AG04450 (cell line): ENCODE measurements at regions of chr7 and their contacts with region 1.

Region 1: GRCh38 chr7:29921404-29922010 is 68.1 kb downstream of the SCRN1 start:
- DNase-seq: peak; percentile 30
- H3K4me3 ChIP-seq: no peak overlapping the region
- H3K27ac ChIP-seq: no peak overlapping the region
- H3K27me3 ChIP-seq: no peaks in the 10 kb centered on the region
- CTCF ChIP-seq: peak; percentile 94

Region 2: GRCh38 chr7:29228289-29229011 is 693.1 kb before region 1 on chr7:
- CTCF ChIA-PET with region 1: no interaction called
- POLR2A ChIA-PET with region 1: no interaction called
- DNase-seq: no peak
- H3K4me3 ChIP-seq: no peak overlapping the region
- H3K27ac ChIP-seq: no peak overlapping the region
- H3K27me3 ChIP-seq: no peaks in the 10 kb centered on the region
- CTCF ChIP-seq: no peak

Region 3: GRCh38 chr7:29636009-29636351 is 285.5 kb before region 1 on chr7:
- CTCF ChIA-PET with region 1: interaction called, 18 read pairs
- POLR2A ChIA-PET with region 1: no interaction called
- DNase-seq: no peak
- H3K4me3 ChIP-seq: no peak overlapping the region
- H3K27ac ChIP-seq: no peak overlapping the region
- H3K27me3 ChIP-seq: no peaks in the 10 kb centered on the region
- CTCF ChIP-seq: no peak

Region 4: GRCh38 chr7:29878081-29878688 is 43.3 kb before region 1 on chr7:
- CTCF ChIA-PET with region 1: interaction called, 39 read pairs
- POLR2A ChIA-PET with region 1: no interaction called
- DNase-seq: peak; percentile 20
- H3K4me3 ChIP-seq: no peak overlapping the region
- H3K27ac ChIP-seq: no peak overlapping the region
- H3K27me3 ChIP-seq: peaks cover 7% of the 10 kb centered on the region
- CTCF ChIP-seq: peak; percentile 66

Region 5: GRCh38 chr7:29894256-29894655 is 27.3 kb before region 1 on chr7:
- CTCF ChIA-PET with region 1: no interaction called
- POLR2A ChIA-PET with region 1: no interaction called
- DNase-seq: no peak
- H3K4me3 ChIP-seq: no peak overlapping the region
- H3K27ac ChIP-seq: no peak overlapping the region
- H3K27me3 ChIP-seq: peaks cover 10% of the 10 kb centered on the region
- CTCF ChIP-seq: no peak

Region 6: DNA sequence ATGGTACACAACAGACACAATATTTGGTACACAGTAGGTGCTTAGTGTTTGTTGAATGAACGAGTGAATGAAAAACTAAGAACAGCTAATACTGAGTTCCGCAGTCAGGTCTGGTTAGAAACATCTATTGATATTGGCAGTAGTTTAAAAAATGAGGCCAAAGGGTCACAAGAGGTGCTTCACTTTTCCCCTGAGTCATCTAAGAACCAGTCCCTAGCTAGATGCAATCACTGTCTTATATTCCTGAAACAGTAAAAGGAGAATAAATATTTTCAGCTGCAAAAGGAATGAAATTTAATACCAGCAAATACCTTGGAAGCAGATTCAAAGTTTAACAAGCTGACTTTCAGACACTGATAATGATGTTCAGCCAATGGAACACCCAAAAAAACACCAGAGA is 13.6 kb after region 1 on chr7:
- CTCF ChIA-PET with region 1: interaction called, 52 read pairs
- POLR2A ChIA-PET with region 1: no interaction called
- DNase-seq: no peak
- H3K4me3 ChIP-seq: no peak overlapping the region
- H3K27ac ChIP-seq: no peak overlapping the region
- H3K27me3 ChIP-seq: no peaks in the 10 kb centered on the region
- CTCF ChIP-seq: no peak

Region 7: DNA sequence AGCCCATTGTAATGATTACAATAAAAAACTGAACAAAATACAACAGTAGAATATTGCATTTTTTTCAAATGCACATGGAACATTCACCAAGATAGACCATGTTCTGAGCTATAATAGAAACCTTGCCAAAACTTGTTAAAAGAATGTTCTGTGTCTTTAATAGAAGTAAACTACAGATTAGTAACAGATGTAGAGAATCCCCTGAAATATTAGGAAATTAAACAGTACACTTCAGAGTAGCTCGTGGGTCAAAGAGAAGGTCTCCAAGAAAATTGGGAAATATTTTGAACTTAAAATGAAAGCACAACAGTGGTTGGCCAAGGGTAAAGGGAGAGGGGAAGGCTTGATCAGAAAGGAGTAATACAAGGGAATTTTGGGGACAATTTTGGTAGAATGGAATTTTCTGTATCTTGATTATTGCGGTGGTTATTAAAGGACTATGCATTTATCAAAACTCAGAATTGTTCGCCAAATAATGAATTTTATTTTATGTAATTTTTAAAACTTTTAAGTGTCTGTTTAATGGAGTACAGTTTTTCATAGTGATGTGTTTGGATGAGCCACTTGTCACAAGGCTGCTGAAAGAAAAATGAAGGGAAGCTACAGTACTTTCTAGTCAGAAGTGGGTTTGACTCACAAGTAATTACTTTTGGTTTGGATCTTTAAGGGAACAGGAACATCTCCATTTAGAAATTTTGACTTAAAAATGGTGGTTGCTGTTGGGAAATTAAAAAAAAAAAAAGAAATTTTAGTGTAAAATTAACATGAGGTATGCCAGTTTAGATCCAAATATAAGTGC is 116.9 kb after region 1 on chr7:
- CTCF ChIA-PET with region 1: interaction called, 10 read pairs
- POLR2A ChIA-PET with region 1: no interaction called
- DNase-seq: no peak
- H3K4me3 ChIP-seq: no peak overlapping the region
- H3K27ac ChIP-seq: no peak overlapping the region
- H3K27me3 ChIP-seq: no peaks in the 10 kb centered on the region
- CTCF ChIP-seq: no peak